Activated CD4-positive, alpha-beta T cell treated with anti-CD3 and anti-CD28 coated beads, Interleukin-2, amount 10 ng/mL, durations not matched to agents 7 days and 5 days (primary cell): ENCODE measurements at regions of chr15 and their contacts with region 1.

Region 1: GRCh38 chr15:55834331-55834730 is 91.4 kb upstream of the PRTG start:
- DNase-seq: no peak
- H3K4me3 Mint-ChIP-seq: no peak overlapping the region
- H3K27ac Mint-ChIP-seq: no peak overlapping the region
- H3K4me1 Mint-ChIP-seq: peaks cover 12% of the 10 kb centered on the region
- H3K27me3 Mint-ChIP-seq: no peaks in the 10 kb centered on the region

Region 2: GRCh38 chr15:55694652-55695150 is 139.6 kb before region 1 on chr15:
- CTCF ChIA-PET with region 1: interaction called, 10 read pairs
- POLR2A ChIA-PET with region 1: no interaction called
- DNase-seq: no peak
- H3K4me3 Mint-ChIP-seq: no peak overlapping the region
- H3K27ac Mint-ChIP-seq: no peak overlapping the region
- H3K4me1 Mint-ChIP-seq: no peaks in the 10 kb centered on the region
- H3K27me3 Mint-ChIP-seq: peaks cover 6% of the 10 kb centered on the region

Region 3: DNA sequence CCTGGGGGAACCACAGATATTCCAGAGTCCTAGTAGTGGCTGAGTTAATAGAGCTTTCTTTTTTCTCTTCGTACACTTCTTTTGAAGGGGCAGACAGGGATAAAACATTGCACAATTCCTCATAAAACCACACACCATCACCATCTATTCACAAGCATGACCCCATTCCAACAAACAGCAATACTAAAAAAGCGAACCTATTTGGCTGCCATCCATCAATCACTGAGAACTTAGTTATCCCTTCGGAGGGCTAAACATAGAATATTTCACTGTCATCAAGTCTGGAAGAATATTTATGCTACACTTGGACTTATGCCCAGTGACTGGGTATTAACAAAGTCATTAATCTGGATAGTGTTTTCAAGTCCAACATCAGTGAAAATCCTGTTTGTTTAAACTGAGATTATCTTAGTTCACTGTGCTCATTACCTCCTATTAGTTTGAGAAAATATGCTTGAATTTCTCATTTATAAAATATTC is 11.1 kb before region 1 on chr15:
- CTCF ChIA-PET with region 1: no interaction called
- POLR2A ChIA-PET with region 1: no interaction called
- DNase-seq: no peak
- H3K4me3 Mint-ChIP-seq: no peak overlapping the region
- H3K27ac Mint-ChIP-seq: no peak overlapping the region
- H3K4me1 Mint-ChIP-seq: peaks cover 3% of the 10 kb centered on the region
- H3K27me3 Mint-ChIP-seq: no peaks in the 10 kb centered on the region

Region 4: GRCh38 chr15:55868707-55869106 is 34.4 kb after region 1 on chr15:
- CTCF ChIA-PET with region 1: no interaction called
- POLR2A ChIA-PET with region 1: no interaction called
- DNase-seq: no peak
- H3K4me3 Mint-ChIP-seq: no peak overlapping the region
- H3K27ac Mint-ChIP-seq: no peak overlapping the region
- H3K4me1 Mint-ChIP-seq: peaks cover 3% of the 10 kb centered on the region
- H3K27me3 Mint-ChIP-seq: no peaks in the 10 kb centered on the region